PC-9 (cell line): ENCODE measurements at regions of chr19 and their contacts with region 1.

Region 1: DNA sequence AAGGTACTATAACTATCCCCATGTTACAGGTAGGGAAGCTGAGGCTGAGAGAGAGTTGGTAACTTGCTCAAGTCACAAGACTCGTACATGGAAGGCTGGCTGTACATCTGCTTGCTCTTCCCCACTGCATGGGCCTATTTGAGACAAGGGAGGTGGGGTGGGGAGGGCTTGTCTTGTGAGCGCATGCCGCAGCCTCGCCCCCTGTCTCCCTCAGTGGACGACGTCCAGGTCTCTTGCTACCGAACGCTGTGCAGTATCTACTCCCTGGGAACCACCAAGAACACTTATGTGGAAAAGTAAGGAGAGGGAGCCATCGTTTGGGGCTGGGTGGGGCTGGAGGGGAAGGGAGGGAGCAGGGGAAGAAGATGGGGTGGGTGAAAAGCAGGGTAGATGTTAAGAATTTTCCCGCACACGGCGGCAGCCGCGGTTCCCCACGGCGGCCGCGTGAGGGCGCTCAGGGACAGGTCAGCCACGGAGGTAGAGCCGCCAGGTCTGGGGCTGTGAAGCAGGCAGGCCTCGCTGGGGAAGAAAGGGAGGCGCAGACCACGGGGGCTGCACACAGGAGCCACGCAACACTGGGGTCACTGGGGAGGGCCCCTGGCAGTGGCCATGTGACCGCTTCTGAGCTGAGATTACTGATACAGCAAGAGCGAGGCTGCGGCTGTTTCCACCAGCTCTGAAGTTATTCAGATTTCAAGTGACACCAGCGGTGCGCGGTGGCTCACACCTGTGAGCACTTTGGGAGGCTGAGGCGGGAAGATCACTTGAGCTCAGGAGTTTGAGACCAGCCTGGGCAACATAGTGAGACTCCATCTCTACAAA is 81.5 kb downstream of the RYR1 start:
- DNase-seq: peak in 1 of 2 experiments; percentile 70
- H3K4me3 ChIP-seq: no peak overlapping the region
- H3K27ac ChIP-seq: no peak overlapping the region
- H3K4me1 ChIP-seq: no peaks in the 10 kb centered on the region
- H3K27me3 ChIP-seq: peaks cover 15% of the 10 kb centered on the region; the same call in 1 of the 2 replicates
- CTCF ChIP-seq: peak; percentile 90

Region 2: DNA sequence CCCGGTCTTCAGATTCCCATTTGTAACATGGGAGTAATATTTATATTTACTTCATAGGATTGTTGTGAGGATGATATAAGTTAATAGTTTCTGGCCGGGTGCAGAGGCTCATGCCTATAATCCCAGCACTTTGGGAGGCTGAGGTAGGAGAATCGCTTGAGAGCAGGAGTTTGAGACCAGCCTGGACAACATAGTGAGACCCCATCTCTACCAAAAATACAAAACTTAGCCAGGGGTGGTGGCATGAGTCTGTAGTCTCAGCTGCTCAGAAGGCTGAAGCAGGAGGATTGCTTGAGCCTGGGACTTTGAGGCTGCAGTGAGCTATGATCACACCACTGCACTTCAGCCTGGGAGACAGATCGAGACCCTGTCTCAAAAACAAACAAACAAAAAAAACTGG is 168.2 kb before region 1 on chr19:
- CTCF ChIA-PET with region 1: no interaction called
- POLR2A ChIA-PET with region 1: no interaction called
- intact Hi-C with region 1: no loop called
- DNase-seq: no peak
- H3K4me3 ChIP-seq: no peak overlapping the region
- H3K27ac ChIP-seq: no peak overlapping the region
- H3K4me1 ChIP-seq: no peaks in the 10 kb centered on the region
- H3K27me3 ChIP-seq: no peaks in the 10 kb centered on the region
- CTCF ChIP-seq: no peak

Region 3: GRCh38 chr19:38483016-38483630 is 31.9 kb before region 1 on chr19:
- CTCF ChIA-PET with region 1: no interaction called
- POLR2A ChIA-PET with region 1: no interaction called
- intact Hi-C with region 1: no loop called
- DNase-seq: no peak
- H3K4me3 ChIP-seq: no peak overlapping the region
- H3K27ac ChIP-seq: no peak overlapping the region
- H3K4me1 ChIP-seq: no peaks in the 10 kb centered on the region
- H3K27me3 ChIP-seq: peaks cover 74% of the 10 kb centered on the region
- CTCF ChIP-seq: no peak

Region 4: GRCh38 chr19:38502410-38503094 is 12.5 kb before region 1 on chr19:
- CTCF ChIA-PET with region 1: no interaction called
- POLR2A ChIA-PET with region 1: no interaction called
- intact Hi-C with region 1: no loop called
- DNase-seq: no peak
- H3K4me3 ChIP-seq: no peak overlapping the region
- H3K27ac ChIP-seq: no peak overlapping the region
- H3K4me1 ChIP-seq: no peaks in the 10 kb centered on the region
- H3K27me3 ChIP-seq: peaks cover 59% of the 10 kb centered on the region
- CTCF ChIP-seq: no peak

Region 5: DNA sequence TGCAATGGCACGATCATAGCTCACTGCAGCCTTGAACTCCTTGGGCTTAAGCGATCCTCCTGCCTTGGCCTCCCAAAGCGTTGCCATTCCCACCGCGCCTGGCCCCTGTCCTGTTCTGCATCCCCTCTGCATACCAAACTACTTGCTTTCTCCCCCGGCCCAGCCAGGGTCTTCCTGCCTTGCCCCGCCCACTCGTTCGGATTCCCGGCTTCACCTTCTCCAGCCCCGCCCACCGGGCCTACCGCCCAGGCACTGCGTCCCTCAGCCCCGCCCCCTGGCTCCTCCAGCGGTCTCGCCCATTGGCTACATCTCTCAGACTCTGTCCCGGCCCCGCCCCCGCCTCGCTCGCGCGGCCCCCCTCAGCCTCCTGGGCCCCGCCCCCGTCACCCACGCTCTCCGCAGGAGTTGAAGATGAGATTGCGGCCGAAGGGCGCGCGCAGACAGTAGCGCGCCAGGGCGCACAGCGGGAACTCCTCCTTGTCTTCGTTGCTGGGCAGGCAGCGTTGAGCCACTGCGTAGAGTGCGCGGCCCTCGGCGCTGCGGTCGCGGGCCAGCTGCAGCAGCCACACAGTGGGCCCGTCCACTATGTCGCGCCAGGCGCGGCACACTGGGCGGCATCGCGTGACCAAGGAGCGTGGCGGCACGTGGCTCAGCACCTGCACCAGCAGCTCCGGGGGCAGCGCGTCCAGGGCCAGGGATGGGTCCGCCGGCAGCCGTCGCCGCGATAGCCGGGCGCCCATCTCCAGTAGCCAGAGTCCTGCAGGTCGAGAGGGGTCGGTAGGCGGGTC is 434.8 kb after region 1 on chr19:
- CTCF ChIA-PET with region 1: no interaction called
- POLR2A ChIA-PET with region 1: no interaction called
- intact Hi-C with region 1: loop called (anchors 5 kb)
- DNase-seq: peak; percentile 64 to 91
- H3K4me3 ChIP-seq: peak overlapping the region; percentile 50; the same call in 1 of the 2 replicates
- H3K27ac ChIP-seq: no peak overlapping the region
- H3K4me1 ChIP-seq: no peaks in the 10 kb centered on the region
- H3K27me3 ChIP-seq: no peaks in the 10 kb centered on the region
- CTCF ChIP-seq: no peak